ENCODE measurements at regions of chr16 and their contacts with region 1.

Region 1: DNA sequence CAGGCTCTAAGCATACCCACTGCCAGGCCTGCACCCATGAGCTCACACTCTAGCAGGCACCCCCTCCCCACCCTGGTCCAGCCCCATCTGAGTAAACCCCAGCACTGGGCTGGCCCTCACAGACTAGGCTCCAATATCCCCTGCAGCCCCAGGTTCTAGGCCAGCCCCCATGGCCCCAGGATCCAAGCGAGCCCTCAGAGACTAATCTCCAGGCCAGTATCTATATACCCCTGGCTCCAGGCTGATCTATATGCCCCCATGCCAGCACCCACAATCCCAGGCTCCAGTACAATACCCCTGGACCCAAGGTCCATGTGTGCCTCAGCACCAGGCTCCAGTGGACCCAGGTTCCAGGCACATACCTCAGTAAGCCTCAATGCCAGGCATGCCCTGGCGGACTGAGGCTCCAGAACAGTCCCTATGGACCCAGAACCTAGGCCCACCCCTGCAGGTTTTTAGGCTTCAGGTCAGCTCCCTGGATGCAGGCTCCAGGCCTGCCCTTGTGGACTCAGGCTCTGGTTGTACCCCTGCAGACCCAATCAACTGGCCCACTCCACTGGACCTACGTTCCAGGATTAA is 38.5 kb downstream of the POLR3E start:
- DNase-seq: no peak
- H3K4me3 Mint-ChIP-seq: no peak overlapping the region
- H3K27ac Mint-ChIP-seq: no peak overlapping the region
- H3K4me1 Mint-ChIP-seq: peaks cover 22% of the 10 kb centered on the region
- H3K27me3 Mint-ChIP-seq: no peaks in the 10 kb centered on the region

Region 2: DNA sequence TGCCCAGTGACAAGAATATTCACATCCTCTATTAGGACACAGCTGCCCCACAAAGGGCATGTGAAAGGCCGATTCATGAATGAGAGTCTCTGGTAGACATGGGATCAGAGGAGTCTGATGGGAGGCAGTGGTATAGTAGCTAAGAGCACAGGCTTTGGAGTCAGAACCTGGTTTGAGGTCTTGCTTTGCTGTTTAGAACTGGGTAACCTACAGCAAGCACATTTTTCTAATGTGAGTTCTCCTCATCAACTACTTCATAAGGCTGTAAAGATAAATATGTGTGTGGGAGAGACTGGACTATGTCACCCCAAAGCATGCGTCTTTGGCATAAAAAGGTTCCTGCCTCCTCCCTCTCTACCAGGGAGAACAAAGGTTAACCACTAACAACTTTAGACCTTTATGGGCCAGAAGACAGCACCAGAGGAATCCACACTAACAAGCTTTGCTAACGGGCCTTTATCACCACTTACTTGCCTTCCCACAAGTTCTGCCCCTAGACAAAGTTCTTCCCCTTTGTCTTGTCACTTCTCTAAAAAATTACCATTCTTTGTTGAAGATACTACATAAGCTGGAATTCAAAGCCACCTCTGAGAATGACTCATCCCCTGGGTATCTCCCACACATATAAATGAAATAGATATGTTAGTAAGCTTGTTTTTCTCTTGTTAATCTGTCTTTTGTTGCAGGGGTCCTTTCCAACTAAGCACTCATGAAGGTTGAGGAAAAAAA is 17.6 kb after region 1 on chr16:
- intact Hi-C with region 1: loop called (anchors 1 kb)
- DNase-seq: peak; percentile 6
- H3K4me3 Mint-ChIP-seq: peak overlapping the region; percentile 48
- H3K27ac Mint-ChIP-seq: peak overlapping the region; percentile 94
- H3K4me1 Mint-ChIP-seq: peaks cover 58% of the 10 kb centered on the region
- H3K27me3 Mint-ChIP-seq: no peaks in the 10 kb centered on the region